CD8-positive, alpha-beta T cell (primary cell): ENCODE measurements at regions of chr5 and their contacts with region 1.

Region 1: DNA sequence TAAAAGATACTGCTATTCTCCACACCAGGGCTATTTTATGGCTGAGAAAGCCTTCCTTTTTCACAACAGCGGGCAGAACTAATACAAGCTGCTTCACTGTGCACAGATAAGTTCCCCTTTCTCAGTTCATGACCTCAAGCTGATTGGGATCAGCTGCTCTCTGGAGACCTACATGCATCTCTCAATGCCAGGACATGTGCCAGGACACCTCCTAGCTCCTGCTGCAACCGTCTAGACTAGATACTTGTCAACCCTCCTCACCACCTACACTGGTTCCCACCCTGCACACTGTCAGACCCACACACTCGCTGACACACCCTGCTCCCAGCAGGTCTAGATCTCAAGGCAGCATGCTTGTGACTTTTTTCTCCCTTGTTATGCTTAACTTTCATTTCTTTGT is 39.8 kb downstream of the STARD4 start:
- DNase-seq: no peak
- ATAC-seq: no peak
- H3K4me3 ChIP-seq: no peak overlapping the region
- H3K4me3 Mint-ChIP-seq: no peak overlapping the region
- H3K27ac ChIP-seq: peak overlapping the region in 1 of 2 experiments; percentile 7
- H3K27ac Mint-ChIP-seq: peak overlapping the region; percentile 78
- H3K4me1 ChIP-seq: no peaks in the 10 kb centered on the region
- H3K4me1 Mint-ChIP-seq: peaks cover 8% of the 10 kb centered on the region
- H3K27me3 ChIP-seq: no peaks in the 10 kb centered on the region
- H3K27me3 Mint-ChIP-seq: no peaks in the 10 kb centered on the region
- CTCF ChIP-seq: no peak

Region 2: DNA sequence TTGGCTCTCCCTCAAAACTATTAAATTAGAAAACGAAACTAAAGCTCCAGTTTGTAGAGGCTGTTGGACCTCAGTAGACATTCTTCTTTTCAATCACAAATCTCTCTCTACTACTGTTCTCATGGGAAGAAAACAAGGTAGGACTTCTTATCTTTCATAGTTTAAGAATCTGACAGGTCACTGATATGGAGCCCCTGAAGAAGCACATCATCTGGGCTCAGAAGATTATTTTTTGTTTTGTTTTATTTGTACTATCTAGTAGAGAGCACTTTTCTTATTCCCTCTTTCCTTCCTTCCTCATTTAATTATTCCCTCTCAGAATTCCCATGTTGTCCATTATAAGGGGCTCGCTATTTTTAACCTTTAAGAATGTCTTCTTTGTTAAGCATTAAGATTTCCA is 13.5 kb after region 1 on chr5:
- CTCF ChIA-PET with region 1: no interaction called
- POLR2A ChIA-PET with region 1: no interaction called
- intact Hi-C with region 1: loop called in 1 of 2 experiments (anchors 1 kb)
- DNase-seq: no peak
- ATAC-seq: no peak
- H3K4me3 ChIP-seq: no peak overlapping the region
- H3K4me3 Mint-ChIP-seq: no peak overlapping the region
- H3K27ac ChIP-seq: no peak overlapping the region
- H3K27ac Mint-ChIP-seq: peak overlapping the region; percentile 39
- H3K4me1 ChIP-seq: no peaks in the 10 kb centered on the region
- H3K4me1 Mint-ChIP-seq: peaks cover 2% of the 10 kb centered on the region
- H3K27me3 ChIP-seq: no peaks in the 10 kb centered on the region
- H3K27me3 Mint-ChIP-seq: no peaks in the 10 kb centered on the region
- CTCF ChIP-seq: no peak

Region 3: DNA sequence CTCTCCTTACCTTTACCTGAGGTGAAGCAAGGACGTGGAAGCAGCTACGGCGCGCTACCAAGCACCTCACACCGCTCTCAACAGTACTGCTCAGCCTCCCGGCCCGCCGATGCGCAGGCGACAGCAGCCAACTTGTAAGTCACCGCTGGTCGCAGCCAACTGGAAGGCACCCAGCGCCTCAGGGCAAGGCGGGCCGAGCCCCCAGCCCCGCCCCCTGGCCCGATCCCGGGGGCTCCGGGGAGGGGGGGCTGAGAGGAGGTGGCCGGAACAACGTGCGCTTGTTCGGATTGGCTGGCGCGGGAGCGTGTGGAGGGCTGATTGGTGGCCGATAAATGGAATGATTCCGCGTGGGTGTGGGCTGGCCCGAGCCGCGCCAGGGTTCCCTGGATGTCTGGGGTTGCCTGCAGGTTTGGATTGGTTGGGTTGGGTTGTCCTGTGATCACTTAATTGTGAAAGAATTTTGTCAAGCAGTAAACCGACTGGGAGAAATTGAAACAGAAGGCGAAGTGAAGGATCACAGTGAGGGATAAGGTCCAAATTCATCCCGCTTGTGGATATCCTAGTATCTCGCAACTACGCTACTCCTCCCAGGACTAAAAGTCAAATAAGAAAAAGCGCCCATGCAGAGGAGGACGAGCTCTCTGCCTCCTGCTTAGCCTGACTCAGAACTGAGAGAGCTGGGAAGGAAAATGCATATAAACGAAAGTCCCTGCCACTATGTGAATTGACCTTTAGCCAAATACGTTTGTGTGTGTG is 40.0 kb after region 1 on chr5 and contains the start of gene STARD4:
- CTCF ChIA-PET with region 1: no interaction called
- POLR2A ChIA-PET with region 1: no interaction called
- intact Hi-C with region 1: no loop called
- DNase-seq: peak; percentile 89 to 97 (median 95)
- ATAC-seq: peak; percentile 94
- H3K4me3 ChIP-seq: peak within 1 kb of the TSS; percentile 96 to 97
- H3K4me3 Mint-ChIP-seq: peak within 1 kb of the TSS; percentile 96
- H3K27ac ChIP-seq: peak within 1 kb of the TSS; percentile 75 to 92
- H3K27ac Mint-ChIP-seq: peak within 1 kb of the TSS; percentile 95
- H3K4me1 ChIP-seq: peaks cover 26% of the 10 kb centered on the region
- H3K4me1 Mint-ChIP-seq: peaks cover 41% of the 10 kb centered on the region
- H3K27me3 ChIP-seq: no peaks in the 10 kb centered on the region
- H3K27me3 Mint-ChIP-seq: no peaks in the 10 kb centered on the region
- CTCF ChIP-seq: no peak
- total RNA-seq, gene STARD4: 31.7 to 32.4 TPM